ENCODE measurements at regions of chr11 and their contacts with region 1.

Region 1: DNA sequence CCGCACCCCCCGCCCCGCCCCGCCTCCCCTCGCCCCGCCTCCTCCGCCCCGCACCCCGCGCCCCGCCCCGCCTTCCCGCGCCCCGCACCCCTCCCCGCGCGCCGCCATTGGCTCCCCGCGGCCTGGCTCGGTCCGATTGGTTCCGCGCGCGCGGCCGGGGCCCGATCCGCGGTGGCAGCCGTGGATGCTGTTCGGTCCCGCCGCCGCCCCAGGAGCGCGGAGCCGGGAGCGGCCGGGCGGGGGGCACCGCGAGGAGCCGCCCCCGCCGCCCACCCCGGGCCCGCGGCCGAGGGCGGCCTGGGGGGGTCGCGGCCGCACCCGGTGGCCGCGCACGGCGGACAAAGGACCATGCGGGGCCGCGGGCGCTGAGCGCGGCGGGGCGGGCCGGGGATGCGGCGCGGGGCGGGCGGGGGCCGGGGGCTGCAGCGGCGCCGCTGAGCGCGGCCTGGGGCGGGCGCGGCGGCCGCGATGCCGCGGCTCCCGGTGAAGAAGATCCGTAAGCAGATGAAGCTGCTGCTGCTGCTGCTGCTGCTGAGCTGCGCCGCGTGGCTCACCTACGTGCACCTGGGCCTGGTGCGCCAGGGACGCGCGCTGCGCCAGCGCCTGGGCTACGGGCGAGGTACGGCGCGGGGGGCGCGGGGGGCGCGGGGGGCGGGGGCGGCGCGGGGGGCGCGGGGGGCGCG is at the start of gene B4GALNT4:
- DNase-seq: peak in 1 of 2 experiments; percentile 60
- H3K4me3 ChIP-seq: peak within 1 kb of the TSS; percentile 56
- H3K4me3 Mint-ChIP-seq: peak within 1 kb of the TSS; percentile 91
- H3K27ac Mint-ChIP-seq: no peak within 1 kb of the TSS
- H3K4me1 ChIP-seq: peaks cover 26% of the 10 kb centered on the region
- H3K4me1 Mint-ChIP-seq: peaks cover 15% of the 10 kb centered on the region
- H3K27me3 ChIP-seq: no peaks in the 10 kb centered on the region
- H3K27me3 Mint-ChIP-seq: peaks cover 2% of the 10 kb centered on the region
- CTCF ChIP-seq: no peak
- total RNA-seq, gene B4GALNT4: 30.7 and 35.6 TPM in 2 replicates

Region 2: GRCh38 chr11:396948-397548 is 27.6 kb after region 1 on chr11:
- CTCF ChIA-PET with region 1: interaction called, 8 read pairs
- POLR2A ChIA-PET with region 1: interaction called, 3 read pairs
- intact Hi-C with region 1: loop called (anchors 2 kb)
- DNase-seq: no peak
- H3K4me3 ChIP-seq: no peak overlapping the region
- H3K4me3 Mint-ChIP-seq: no peak overlapping the region
- H3K27ac Mint-ChIP-seq: no peak overlapping the region
- H3K4me1 ChIP-seq: peaks cover 22% of the 10 kb centered on the region
- H3K4me1 Mint-ChIP-seq: peaks cover 8% of the 10 kb centered on the region
- H3K27me3 ChIP-seq: no peaks in the 10 kb centered on the region
- H3K27me3 Mint-ChIP-seq: no peaks in the 10 kb centered on the region
- CTCF ChIP-seq: no peak

Measured in Caco-2 (cell line).